MCF 10A (cell line): ENCODE measurements at regions of chr4 and their contacts with region 1.

Region 1: GRCh38 chr4:140359562-140360427 is 13.7 kb upstream of the SCOC start:
- DNase-seq: peak; percentile 90
- H3K4me3 Mint-ChIP-seq: no peak overlapping the region
- H3K27ac Mint-ChIP-seq: no peak overlapping the region
- H3K4me1 Mint-ChIP-seq: peaks cover 8% of the 10 kb centered on the region
- H3K27me3 Mint-ChIP-seq: peaks cover 13% of the 10 kb centered on the region
- CTCF ChIP-seq: peak; percentile 80

Region 2: DNA sequence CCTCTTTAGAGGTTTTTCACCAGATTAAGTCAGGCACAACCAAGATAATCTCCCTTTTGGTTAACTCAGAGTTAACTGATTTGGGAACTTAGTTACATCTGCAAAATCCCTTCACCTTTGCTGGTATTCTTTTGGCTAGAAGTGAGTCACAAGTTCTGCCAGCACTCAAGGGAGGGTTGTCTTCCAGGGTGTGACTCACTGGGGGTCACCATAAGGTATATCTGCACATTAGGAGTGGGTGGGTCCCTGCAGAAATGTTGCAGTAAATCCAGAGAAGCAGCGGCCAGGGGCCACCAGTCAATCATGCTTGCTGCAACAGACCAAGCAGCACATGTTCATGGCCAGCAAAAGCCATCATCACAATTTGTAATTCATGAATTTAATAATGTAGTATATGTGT is 146.0 kb before region 1 on chr4:
- CTCF ChIA-PET with region 1: no interaction called
- POLR2A ChIA-PET with region 1: no interaction called
- intact Hi-C with region 1: no loop called
- DNase-seq: peak; percentile 55
- H3K4me3 Mint-ChIP-seq: no peak overlapping the region
- H3K27ac Mint-ChIP-seq: peak overlapping the region; percentile 52
- H3K4me1 Mint-ChIP-seq: peaks cover 12% of the 10 kb centered on the region
- H3K27me3 Mint-ChIP-seq: no peaks in the 10 kb centered on the region
- CTCF ChIP-seq: no peak

Region 3: DNA sequence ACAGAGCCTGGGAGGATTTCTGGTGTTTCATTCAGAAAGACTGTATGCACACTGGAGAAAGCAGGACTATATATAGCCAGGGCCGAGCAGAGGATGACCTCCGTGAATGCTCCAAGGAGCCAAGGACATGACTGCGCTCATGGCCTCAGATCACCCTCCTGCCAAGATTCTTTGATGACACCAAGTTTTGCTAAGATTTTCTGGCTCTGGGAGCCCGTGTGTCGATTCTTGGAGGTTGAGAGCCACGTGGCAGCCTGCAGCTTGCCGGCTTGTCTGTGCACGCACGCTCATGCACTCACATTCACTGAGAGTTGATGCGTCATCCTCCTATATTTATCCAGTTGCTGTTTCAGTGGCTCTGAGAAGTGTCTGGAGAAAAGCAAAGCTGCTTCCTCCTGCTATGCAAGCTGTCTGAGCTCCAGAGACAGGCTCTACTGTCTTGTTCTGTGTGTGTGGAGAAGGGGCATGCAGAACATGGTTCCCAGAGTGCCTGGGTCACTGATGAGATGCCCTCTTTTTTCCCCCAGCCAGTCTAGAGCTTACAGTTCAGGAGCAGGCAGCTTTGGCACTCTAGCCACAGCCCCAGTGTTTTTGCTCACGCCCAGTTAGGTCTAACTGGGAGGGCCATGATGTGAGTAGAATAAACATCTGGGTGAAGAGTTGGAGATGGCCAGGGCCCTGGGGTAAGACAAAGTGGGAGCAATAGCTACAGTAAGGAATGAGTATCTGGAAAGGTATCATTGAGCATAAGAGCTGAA is 51.2 kb before region 1 on chr4:
- CTCF ChIA-PET with region 1: interaction called, 11 read pairs
- POLR2A ChIA-PET with region 1: interaction called, 3 read pairs
- intact Hi-C with region 1: no loop called
- DNase-seq: peak; percentile 91
- H3K4me3 Mint-ChIP-seq: peak overlapping the region; percentile 59
- H3K27ac Mint-ChIP-seq: peak overlapping the region; percentile 54
- H3K4me1 Mint-ChIP-seq: peaks cover 49% of the 10 kb centered on the region
- H3K27me3 Mint-ChIP-seq: no peaks in the 10 kb centered on the region
- CTCF ChIP-seq: no peak

Region 4: DNA sequence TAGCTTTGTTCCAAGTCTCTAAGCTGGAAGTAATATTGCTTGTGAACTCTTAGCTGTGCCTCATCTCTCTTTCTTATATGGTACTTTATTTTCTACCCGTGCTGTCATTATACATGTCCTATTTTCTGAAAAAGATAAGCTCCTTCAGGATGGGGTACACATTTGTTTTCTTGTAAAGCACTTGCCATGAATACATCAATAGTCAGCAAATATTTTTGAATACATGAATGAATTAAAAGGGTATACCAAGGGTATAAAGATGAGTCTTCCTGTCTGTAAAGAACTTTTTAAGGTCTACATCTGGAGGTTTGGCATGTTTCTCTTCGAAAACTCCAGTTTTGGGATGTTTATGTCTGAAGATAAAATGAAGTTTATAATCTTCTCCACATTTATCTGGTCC is 40.3 kb after region 1 on chr4:
- CTCF ChIA-PET with region 1: interaction called, 10 read pairs
- POLR2A ChIA-PET with region 1: no interaction called
- intact Hi-C with region 1: no loop called
- DNase-seq: no peak
- H3K4me3 Mint-ChIP-seq: no peak overlapping the region
- H3K27ac Mint-ChIP-seq: no peak overlapping the region
- H3K4me1 Mint-ChIP-seq: no peaks in the 10 kb centered on the region
- H3K27me3 Mint-ChIP-seq: no peaks in the 10 kb centered on the region
- CTCF ChIP-seq: no peak

Region 5: GRCh38 chr4:140595065-140595464 is 235.3 kb after region 1 on chr4:
- CTCF ChIA-PET with region 1: interaction called, 17 read pairs
- POLR2A ChIA-PET with region 1: no interaction called
- intact Hi-C with region 1: no loop called
- DNase-seq: peak; percentile 61
- H3K4me3 Mint-ChIP-seq: no peak overlapping the region
- H3K27ac Mint-ChIP-seq: no peak overlapping the region
- H3K4me1 Mint-ChIP-seq: no peaks in the 10 kb centered on the region
- H3K27me3 Mint-ChIP-seq: peaks cover 32% of the 10 kb centered on the region
- CTCF ChIP-seq: peak; percentile 70

Region 6: DNA sequence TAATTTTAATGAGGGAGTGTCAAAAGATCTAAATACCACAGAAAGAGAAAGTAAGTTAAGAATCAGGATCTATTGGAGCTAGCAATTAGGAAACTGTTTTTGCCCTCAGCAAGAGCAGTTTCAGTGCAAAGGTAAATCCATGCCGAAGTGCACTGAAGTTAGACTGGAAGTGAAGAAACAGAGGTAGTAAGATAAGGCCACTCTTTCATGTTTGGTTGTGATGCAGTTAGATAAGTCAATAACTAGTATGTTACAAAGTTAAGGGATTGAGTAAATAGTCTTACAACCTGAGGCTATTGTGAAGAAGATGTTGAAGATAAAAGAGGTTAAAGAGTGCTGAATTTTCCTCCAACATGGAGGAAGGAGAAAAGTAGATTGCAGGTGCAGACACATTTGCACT is 255.7 kb after region 1 on chr4:
- CTCF ChIA-PET with region 1: interaction called, 99 read pairs
- POLR2A ChIA-PET with region 1: no interaction called
- intact Hi-C with region 1: loop called (anchors 1 kb)
- DNase-seq: no peak
- H3K4me3 Mint-ChIP-seq: no peak overlapping the region
- H3K27ac Mint-ChIP-seq: no peak overlapping the region
- H3K4me1 Mint-ChIP-seq: no peaks in the 10 kb centered on the region
- H3K27me3 Mint-ChIP-seq: no peaks in the 10 kb centered on the region
- CTCF ChIP-seq: no peak